Mammary epithelial cell (primary cell): ENCODE measurements at regions of chr12 and their contacts with region 1.

Region 1: GRCh38 chr12:63103494-63104131 is 47.4 kb downstream of the AVPR1A start:
- DNase-seq: peak; percentile 3
- H3K4me3 ChIP-seq: no peak overlapping the region
- H3K27ac ChIP-seq: no peak overlapping the region
- H3K4me1 ChIP-seq: no peaks in the 10 kb centered on the region
- H3K27me3 ChIP-seq: peaks cover 3% of the 10 kb centered on the region
- CTCF ChIP-seq: peak; percentile 85

Region 2: GRCh38 chr12:63151623-63152320 is 48.2 kb after region 1 on chr12:
- CTCF ChIA-PET with region 1: no interaction called
- dilution Hi-C with region 1: no loop called
- in situ Hi-C with region 1: no loop called
- intact Hi-C with region 1: no loop called
- DNase-seq: peak; percentile 28
- H3K4me3 ChIP-seq: no peak overlapping the region
- H3K27ac ChIP-seq: no peak overlapping the region
- H3K4me1 ChIP-seq: peaks cover 10% of the 10 kb centered on the region
- H3K27me3 ChIP-seq: peaks cover 48% of the 10 kb centered on the region
- CTCF ChIP-seq: peak; percentile 78 to 89

Region 3: DNA sequence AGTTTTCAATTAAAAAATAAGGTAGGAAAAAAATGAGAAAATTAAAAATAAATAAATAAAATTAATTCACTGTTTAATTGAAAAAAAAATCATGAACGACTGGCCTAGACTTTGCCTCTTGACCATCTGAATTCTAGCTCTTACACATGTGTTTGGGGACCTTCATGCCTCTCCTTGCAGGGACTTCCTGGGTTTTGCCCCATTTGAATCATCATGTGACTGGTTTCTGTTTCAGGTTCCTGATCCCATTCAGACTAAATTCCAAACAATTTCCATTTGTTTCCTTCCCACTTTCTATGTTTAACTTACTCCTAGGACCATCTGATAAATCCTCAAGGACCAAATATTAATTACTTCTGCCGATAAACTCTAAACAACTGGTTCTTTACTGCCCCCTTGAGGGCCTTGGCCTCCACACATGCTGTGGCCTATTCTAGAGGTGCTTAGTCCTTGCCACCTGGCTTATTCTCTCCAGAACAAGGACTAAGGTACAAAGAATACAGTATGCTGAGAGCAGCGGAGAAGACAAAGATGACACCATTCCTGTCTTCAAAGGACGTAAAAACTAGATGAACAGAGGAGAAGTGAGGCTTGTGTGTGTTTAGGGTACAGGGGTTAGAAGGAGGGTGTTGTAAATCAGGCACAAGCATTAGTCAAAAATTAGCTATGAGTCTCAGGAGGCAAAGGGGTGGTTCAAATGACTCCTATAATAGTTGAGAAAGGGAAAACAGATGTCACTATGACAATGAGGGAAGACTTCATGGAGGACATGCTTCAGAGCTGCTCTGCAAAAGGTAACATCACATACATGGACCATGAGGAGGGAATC is 173.1 kb after region 1 on chr12:
- CTCF ChIA-PET with region 1: interaction called, 4 read pairs
- dilution Hi-C with region 1: no loop called
- in situ Hi-C with region 1: loop called (anchors 10 to 25 kb)
- intact Hi-C with region 1: loop called (anchors 1 kb)
- DNase-seq: peak; percentile 37
- H3K4me3 ChIP-seq: no peak overlapping the region
- H3K27ac ChIP-seq: no peak overlapping the region
- H3K4me1 ChIP-seq: no peaks in the 10 kb centered on the region
- H3K27me3 ChIP-seq: no peaks in the 10 kb centered on the region
- CTCF ChIP-seq: peak; percentile 89 to 91

Region 4: DNA sequence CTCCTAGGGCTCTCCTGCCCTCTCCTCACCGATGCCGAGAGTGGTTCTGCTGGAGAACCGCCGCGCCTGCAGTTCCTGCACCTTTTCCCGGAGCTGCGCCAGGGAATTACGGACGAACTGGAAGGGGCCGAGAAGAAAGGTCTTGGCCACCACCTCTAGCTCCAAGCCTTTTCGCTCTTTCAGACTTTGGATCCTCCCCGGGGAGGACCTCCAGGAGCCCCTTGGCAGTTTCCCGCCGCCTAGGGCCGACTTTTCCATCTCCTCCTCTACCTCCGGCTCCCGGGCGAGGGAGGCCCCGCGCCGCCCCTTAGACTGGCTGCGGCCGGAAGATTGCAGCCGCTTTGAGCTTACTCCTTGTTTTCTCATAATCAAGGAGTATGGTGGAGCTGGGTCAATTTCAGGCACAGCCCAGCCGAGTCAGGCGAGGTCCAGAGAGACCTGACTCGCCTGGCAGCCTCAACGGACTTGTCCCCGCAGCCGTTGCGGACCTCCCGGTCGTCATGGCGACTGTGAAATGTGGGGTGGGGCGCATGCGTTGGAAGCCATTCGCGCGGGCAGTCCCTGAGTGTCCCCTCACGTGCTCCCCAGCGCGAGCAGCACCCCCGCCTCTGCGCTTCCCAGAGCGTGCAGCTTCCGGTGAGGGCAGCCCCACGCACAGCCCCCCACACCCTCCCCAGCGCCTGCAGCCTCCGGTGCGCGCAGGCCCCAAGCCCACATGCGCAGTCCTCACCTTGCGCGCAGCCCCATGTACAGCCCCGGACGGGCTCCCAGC is 564.6 kb after region 1 on chr12 and contains the start of gene DPY19L2:
- CTCF ChIA-PET with region 1: no interaction called
- dilution Hi-C with region 1: no loop called
- in situ Hi-C with region 1: no loop called
- intact Hi-C with region 1: loop called (anchors 5 kb)
- DNase-seq: peak; percentile 33
- H3K4me3 ChIP-seq: peak within 1 kb of the TSS; percentile 41 to 51 (median 43)
- H3K27ac ChIP-seq: no peak within 1 kb of the TSS
- H3K4me1 ChIP-seq: peaks cover 10% of the 10 kb centered on the region
- H3K27me3 ChIP-seq: peaks cover 12% of the 10 kb centered on the region
- CTCF ChIP-seq: no peak
- total RNA-seq, gene DPY19L2: 0.92 to 1.3 TPM

Region 5: GRCh38 chr12:63766498-63766897 is 662.9 kb after region 1 on chr12:
- CTCF ChIA-PET with region 1: no interaction called
- dilution Hi-C with region 1: no loop called
- in situ Hi-C with region 1: loop called in 1 of 2 experiments (anchors 25 kb)
- intact Hi-C with region 1: loop called (anchors 10 kb)
- DNase-seq: no peak
- H3K4me3 ChIP-seq: no peak overlapping the region
- H3K27ac ChIP-seq: no peak overlapping the region
- H3K4me1 ChIP-seq: no peaks in the 10 kb centered on the region
- H3K27me3 ChIP-seq: peaks cover 4% of the 10 kb centered on the region
- CTCF ChIP-seq: peak in 1 of 2 donors; percentile 23

Region 6: DNA sequence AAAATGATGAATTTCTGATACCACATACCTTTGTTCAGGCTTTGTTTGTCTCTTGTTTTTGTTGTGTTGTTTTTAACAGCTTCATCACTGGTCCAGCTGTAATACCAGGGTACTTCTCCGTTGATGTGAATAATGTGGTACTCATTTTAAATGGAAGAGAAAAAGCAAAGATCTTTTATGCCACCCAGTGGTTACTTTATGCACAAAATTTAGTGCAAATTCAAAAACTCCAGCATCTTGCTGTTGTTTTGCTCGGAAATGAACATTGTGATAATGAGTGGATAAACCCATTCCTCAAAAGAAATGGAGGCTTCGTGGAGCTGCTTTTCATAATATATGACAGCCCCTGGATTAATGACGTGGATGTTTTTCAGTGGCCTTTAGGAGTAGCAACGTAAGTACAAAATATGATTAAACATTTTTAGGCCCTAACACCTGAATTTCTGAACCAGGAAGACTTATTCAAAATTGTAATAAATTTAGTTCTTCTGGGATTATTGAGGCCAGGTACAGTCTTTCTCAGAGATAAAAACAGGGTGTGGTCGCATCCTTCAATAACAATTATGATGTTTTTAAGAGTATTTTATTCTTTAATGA is 698.5 kb after region 1 on chr12:
- CTCF ChIA-PET with region 1: interaction called, 7 read pairs
- dilution Hi-C with region 1: no loop called
- in situ Hi-C with region 1: no loop called
- intact Hi-C with region 1: loop called (anchors 1 kb)
- DNase-seq: peak; percentile 13
- H3K4me3 ChIP-seq: no peak overlapping the region
- H3K27ac ChIP-seq: no peak overlapping the region
- H3K4me1 ChIP-seq: no peaks in the 10 kb centered on the region
- H3K27me3 ChIP-seq: no peaks in the 10 kb centered on the region
- CTCF ChIP-seq: peak; percentile 35 to 53

Region 7: GRCh38 chr12:64256166-64256800 is 1152.7 kb after region 1 on chr12:
- CTCF ChIA-PET with region 1: no interaction called
- dilution Hi-C with region 1: no loop called
- in situ Hi-C with region 1: no loop called
- intact Hi-C with region 1: loop called (anchors 10 kb)
- DNase-seq: peak; percentile 32
- H3K4me3 ChIP-seq: no peak overlapping the region
- H3K27ac ChIP-seq: no peak overlapping the region
- H3K4me1 ChIP-seq: no peaks in the 10 kb centered on the region
- H3K27me3 ChIP-seq: no peaks in the 10 kb centered on the region
- CTCF ChIP-seq: peak; percentile 47 to 65